Ovary (tissue), 10 donors: ENCODE measurements at regions of chr5 and their contacts with region 1.

Region 1: DNA sequence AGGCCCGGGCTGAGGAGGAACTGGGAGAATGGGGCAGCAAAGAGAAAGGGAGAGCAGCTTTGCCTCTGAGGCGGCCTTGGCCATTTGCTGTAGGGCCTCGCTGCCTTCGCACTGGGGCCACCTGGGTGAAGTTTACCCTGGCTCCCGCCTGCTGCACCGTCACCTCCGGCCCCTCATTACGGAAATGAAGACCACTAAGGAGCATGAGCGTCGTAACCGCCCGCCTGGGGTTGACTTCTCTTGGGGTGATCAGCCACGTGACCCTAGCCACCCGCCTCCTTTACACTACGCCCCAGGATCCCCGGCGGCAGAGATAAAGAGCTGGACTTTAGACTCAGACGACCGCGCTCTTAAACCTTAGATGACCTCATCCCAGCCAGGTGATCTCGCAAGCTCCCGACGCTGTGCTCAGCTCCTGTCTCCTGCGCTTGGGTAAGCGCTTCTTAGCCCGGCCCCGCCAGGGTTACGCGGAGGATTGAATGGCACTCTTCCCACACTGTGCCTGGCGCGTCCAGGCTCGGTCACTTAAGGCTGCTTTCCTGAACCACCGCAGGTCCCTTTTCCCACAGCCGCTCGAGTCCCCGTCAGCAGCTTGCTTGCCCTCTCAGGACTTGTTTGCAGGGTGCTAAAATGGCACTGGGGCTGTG is 107.9 kb upstream of the LARP1 start:
- DNase-seq: peak in 4 of 5 donors; percentile 15 to 47 (median 28)
- H3K4me3 ChIP-seq: peak overlapping the region; percentile 22
- H3K27ac ChIP-seq: no peak overlapping the region
- H3K4me1 ChIP-seq: peaks cover 4% of the 10 kb centered on the region
- H3K27me3 ChIP-seq: no peaks in the 10 kb centered on the region
- CTCF ChIP-seq: no peak
- EP300 ChIP-seq: no peak
- POLR2A ChIP-seq: no peak

Region 2: GRCh38 chr5:154072414-154073171 is 574.6 kb before region 1 on chr5:
- intact Hi-C with region 1: loop called in 1 of 4 experiments (anchors 5 kb)
- DNase-seq: peak; percentile 73 to 89 (median 88)
- H3K4me3 ChIP-seq: no peak overlapping the region
- H3K27ac ChIP-seq: no peak overlapping the region
- H3K4me1 ChIP-seq: no peaks in the 10 kb centered on the region
- H3K27me3 ChIP-seq: no peaks in the 10 kb centered on the region
- CTCF ChIP-seq: peak; percentile 84 to 89 (median 88)
- EP300 ChIP-seq: no peak
- POLR2A ChIP-seq: no peak

Region 3: GRCh38 chr5:154287136-154287535 is 360.1 kb before region 1 on chr5:
- intact Hi-C with region 1: no loop called
- DNase-seq: no peak
- H3K4me3 ChIP-seq: no peak overlapping the region
- H3K27ac ChIP-seq: peak overlapping the region in 1 of 2 donors; percentile 47
- H3K4me1 ChIP-seq: peaks cover 16% of the 10 kb centered on the region
- H3K27me3 ChIP-seq: no peaks in the 10 kb centered on the region
- CTCF ChIP-seq: no peak
- EP300 ChIP-seq: no peak
- POLR2A ChIP-seq: no peak

Region 4: DNA sequence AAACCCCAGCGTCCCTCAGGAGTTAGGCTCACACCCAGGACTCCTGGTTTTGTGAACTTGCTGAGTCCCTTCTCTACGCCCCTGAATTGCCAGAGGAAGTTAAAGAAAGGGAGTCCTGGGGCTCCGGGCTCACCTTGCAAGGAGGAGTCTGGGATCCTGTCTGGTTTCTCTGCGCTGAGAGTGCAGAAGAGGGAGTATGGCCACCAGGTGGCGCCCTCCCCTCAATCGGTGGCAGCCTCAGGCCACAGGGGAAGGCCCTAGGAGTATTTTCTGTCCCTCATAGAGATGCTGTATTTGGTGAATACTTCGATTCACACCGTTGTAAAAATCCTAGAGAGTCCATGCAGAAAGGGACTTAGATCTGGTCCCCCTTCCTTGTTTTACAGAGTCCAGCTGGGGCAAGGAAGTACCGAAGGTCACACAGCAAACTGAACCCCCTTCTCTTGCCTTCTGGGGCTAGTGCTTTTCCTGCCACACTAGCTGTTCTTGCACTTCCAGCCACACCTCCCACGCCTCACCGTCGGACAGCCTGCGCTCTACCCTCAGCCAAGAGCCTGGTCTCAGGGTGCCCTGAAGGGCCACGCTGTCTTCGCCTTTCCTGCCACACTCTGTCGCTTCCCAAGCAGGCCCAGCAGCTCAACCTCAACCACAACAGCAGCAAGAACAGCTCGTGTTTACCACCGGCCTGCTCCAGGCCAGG is 179.4 kb before region 1 on chr5:
- intact Hi-C with region 1: loop called in 1 of 4 experiments (anchors 10 kb)
- DNase-seq: peak; percentile 49 to 86 (median 72)
- H3K4me3 ChIP-seq: no peak overlapping the region
- H3K27ac ChIP-seq: no peak overlapping the region
- H3K4me1 ChIP-seq: no peaks in the 10 kb centered on the region
- H3K27me3 ChIP-seq: no peaks in the 10 kb centered on the region
- CTCF ChIP-seq: peak; percentile 37 to 72 (median 50)
- EP300 ChIP-seq: no peak
- POLR2A ChIP-seq: no peak

Region 5: DNA sequence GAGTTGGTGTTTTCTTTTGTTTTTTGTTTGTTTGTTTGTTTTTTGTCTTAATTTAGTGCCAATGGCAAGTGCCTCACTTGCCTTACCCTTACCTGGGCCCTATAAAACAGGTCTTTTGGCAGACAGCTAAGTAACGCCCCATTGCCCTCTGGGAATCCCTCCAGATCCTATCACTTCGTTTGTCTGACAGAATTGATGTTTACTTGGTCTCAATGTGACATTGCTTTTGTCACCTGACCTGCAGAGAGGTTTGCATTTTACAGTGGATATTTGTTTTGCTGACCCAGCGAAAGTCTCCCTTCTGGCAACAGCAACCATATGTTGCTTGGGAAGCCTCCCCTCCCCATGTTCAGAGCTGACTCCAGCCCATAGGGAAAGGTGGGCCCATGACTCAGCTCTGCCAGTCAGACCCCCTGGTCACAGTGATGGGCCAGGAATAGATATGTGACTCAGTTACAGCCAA is 53.9 kb after region 1 on chr5:
- intact Hi-C with region 1: no loop called
- DNase-seq: no peak
- H3K4me3 ChIP-seq: no peak overlapping the region
- H3K27ac ChIP-seq: no peak overlapping the region
- H3K4me1 ChIP-seq: no peaks in the 10 kb centered on the region
- H3K27me3 ChIP-seq: no peaks in the 10 kb centered on the region
- CTCF ChIP-seq: no peak
- EP300 ChIP-seq: no peak
- POLR2A ChIP-seq: no peak

Region 6: DNA sequence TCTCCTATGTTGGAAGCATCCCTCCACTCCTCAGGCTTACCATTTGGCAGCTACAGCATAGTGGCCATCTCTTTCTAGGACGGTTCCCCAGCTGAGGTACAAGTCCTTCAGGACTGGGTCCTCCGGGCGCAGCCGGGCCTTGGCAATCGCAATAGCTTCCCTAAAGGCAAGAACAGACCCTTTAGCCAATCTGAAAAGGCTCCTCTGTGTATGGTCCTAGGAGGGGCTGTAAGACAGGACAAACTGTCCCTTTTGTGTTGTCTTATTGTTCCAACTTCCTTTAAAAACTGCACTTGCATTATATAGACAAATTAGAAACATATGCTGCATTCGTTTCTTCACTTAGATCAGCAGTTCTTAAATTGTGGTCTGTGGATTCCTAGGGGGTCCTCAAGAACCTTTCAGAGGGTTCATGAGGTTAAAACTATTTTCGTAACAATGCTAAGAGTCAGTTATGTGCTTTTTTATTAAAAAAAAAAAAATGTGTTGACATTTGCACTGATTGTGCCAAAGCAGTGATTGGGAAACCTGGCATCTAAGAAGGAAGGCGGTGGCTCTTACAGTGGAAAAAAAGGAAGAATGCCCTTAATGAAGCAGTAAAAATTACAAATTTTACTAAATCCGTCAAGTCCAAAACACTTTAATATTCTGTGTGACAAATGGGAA is 252.0 kb after region 1 on chr5:
- intact Hi-C with region 1: no loop called
- DNase-seq: no peak
- H3K4me3 ChIP-seq: no peak overlapping the region
- H3K27ac ChIP-seq: no peak overlapping the region
- H3K4me1 ChIP-seq: no peaks in the 10 kb centered on the region
- H3K27me3 ChIP-seq: no peaks in the 10 kb centered on the region
- CTCF ChIP-seq: no peak
- EP300 ChIP-seq: no peak
- POLR2A ChIP-seq: no peak